ENCODE measurements at regions of chr3 and their contacts with region 1.

Region 1: GRCh38 chr3:40584625-40585189 is 59.9 kb downstream of the ZNF621 start:
- DNase-seq: peak; percentile 93 to 96
- ATAC-seq: peak; percentile 94
- H3K4me3 ChIP-seq: no peak overlapping the region
- H3K27ac ChIP-seq: no peak overlapping the region
- H3K4me1 ChIP-seq: no peaks in the 10 kb centered on the region
- H3K27me3 ChIP-seq: no peaks in the 10 kb centered on the region

Region 2: DNA sequence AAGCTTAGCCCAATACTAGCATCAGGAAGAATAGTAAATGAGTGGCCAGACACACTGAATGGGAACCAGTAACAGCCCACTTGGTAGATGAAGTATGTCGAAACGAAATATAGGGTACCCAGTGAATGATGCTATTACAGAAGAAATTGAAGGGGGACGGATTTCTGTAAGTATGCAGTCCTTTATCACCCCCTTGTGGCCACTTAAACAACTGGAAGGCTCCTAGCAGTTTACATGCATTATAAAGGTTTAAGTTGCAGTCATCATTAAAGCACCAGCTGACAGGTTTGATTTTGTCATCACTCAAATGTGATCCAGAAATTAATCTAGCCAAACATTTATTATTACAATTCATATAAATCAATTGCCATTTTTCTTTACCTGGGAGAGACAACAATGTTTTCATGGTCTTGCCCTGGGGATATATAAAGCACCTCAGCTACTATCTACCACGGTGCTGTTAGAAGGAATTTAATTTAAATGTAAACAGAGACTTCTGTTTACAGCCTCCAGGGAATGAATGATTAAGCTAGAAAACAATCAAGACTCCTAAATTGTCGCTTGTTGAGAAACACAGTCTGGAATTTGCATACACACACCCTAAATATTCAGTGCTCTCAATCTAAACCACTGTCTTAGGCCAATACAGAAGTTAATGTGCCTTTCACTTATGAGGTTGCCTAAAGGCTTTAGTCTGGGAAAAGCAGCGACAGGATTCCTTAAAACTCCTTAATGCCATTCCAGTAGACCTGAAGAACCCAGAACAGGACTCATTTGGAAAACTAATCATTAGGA is 267.4 kb before region 1 on chr3:
- intact Hi-C with region 1: loop called in 1 of 2 experiments (anchors 10 kb)
- DNase-seq: no peak
- ATAC-seq: no peak
- H3K4me3 ChIP-seq: no peak overlapping the region
- H3K27ac ChIP-seq: no peak overlapping the region
- H3K4me1 ChIP-seq: no peaks in the 10 kb centered on the region
- H3K27me3 ChIP-seq: no peaks in the 10 kb centered on the region

Region 3: GRCh38 chr3:40532252-40532651 is 52.5 kb before region 1 on chr3:
- intact Hi-C with region 1: no loop called
- DNase-seq: no peak
- ATAC-seq: no peak
- H3K4me3 ChIP-seq: no peak overlapping the region
- H3K27ac ChIP-seq: no peak overlapping the region
- H3K4me1 ChIP-seq: no peaks in the 10 kb centered on the region
- H3K27me3 ChIP-seq: no peaks in the 10 kb centered on the region

Region 4: DNA sequence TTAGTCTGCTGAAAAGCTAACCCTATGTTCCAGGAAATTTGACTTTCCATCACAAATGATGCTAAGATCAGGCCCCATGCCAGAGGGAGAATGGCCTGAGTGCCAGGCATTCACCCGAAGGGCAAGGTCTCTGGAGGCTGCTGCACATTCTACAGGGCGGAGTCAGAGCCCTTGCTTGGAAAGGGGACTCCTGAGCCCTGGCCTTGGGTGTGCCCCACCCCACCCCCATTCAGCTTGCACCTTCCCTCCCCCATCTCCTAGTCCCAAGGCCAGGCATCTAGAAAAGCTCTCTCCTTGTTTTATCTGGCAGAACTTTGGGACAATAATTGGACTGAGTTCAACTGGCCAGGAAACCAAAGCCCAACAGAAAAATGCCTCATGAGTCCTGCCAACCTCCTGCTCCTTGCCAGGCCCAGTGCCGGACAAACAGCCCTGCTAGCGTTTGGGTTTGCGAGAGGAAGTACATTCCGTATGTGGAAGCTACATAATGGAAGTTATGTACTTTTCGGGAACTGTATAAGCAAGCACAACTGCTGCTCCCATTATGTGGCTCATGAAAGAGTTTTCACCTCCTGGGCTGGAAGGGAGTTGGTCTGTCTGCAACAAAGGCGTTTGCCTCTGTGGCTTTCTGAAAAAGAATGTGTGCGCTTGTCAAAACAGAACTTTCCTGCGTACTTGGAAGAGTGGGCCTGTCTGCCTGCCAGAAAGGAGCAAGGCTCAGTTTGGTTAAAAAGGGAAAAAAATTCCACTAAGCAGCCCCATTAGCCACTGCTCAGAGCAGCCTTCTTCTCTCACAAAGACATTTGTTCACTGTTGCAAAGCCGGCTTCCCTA is 293.1 kb after region 1 on chr3:
- intact Hi-C with region 1: loop called in 1 of 2 experiments (anchors 10 kb)
- DNase-seq: peak; percentile 90 to 91
- ATAC-seq: peak; percentile 93
- H3K4me3 ChIP-seq: peak overlapping the region in 1 of 2 donors; percentile 27
- H3K27ac ChIP-seq: peak overlapping the region in 1 of 2 donors; percentile 75
- H3K4me1 ChIP-seq: peaks cover 0 to 5% of the 10 kb centered on the region in 2 donors
- H3K27me3 ChIP-seq: no peaks in the 10 kb centered on the region

Region 5: GRCh38 chr3:41198950-41199865 is 614.5 kb after region 1 on chr3 and contains the start of gene CTNNB1:
- intact Hi-C with region 1: loop called (anchors 2 to 5 kb)
- DNase-seq: peak; percentile 95 to 97
- ATAC-seq: peak; percentile 96
- H3K4me3 ChIP-seq: peak within 1 kb of the TSS; percentile 50 to 98
- H3K27ac ChIP-seq: peak within 1 kb of the TSS; percentile 62 to 72
- H3K4me1 ChIP-seq: peaks cover 1 to 3% of the 10 kb centered on the region in 2 donors
- H3K27me3 ChIP-seq: no peaks in the 10 kb centered on the region
- total RNA-seq, gene CTNNB1: 306 to 336 TPM

Region 6: GRCh38 chr3:41881233-41881821 is 1296.6 kb after region 1 on chr3:
- intact Hi-C with region 1: loop called (anchors 1 to 2 kb)
- DNase-seq: no peak
- ATAC-seq: no peak
- H3K4me3 ChIP-seq: no peak overlapping the region
- H3K27ac ChIP-seq: no peak overlapping the region
- H3K4me1 ChIP-seq: no peaks in the 10 kb centered on the region
- H3K27me3 ChIP-seq: no peaks in the 10 kb centered on the region

Measured in aorta (tissue), 5 donors.